Breast epithelium (tissue), 4 donors: ENCODE measurements at regions of chr6 and their contacts with region 1.

Region 1: GRCh38 chr6:9085054-9085708 is 649.8 kb upstream of the SLC35B3 start:
- DNase-seq: no peak
- H3K4me3 ChIP-seq: no peak overlapping the region
- H3K27ac ChIP-seq: no peak overlapping the region
- H3K4me1 ChIP-seq: no peaks in the 10 kb centered on the region
- H3K27me3 ChIP-seq: no peaks in the 10 kb centered on the region
- CTCF ChIP-seq: no peak
- POLR2A ChIP-seq: no peak

Region 2: DNA sequence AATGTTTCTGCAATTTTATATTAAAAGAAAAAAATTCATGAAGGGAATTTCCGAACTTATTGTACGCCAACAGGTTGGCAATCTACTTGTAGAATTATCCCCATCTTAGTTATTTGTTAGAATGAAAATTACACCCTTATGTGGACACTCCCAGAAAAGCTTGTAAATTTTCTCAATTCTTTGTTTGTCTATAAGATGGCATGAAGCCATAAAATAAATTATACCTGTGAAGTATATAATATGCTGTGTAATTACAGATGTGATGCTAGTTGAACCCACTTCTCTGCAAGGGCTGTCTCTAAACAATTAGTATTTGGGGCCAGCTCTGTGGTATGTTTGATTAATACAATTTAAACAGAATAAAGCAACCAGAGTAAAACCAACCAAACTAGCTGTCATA is 1595.8 kb before region 1 on chr6:
- intact Hi-C with region 1: no loop called
- DNase-seq: no peak
- H3K4me3 ChIP-seq: no peak overlapping the region
- H3K27ac ChIP-seq: no peak overlapping the region
- H3K4me1 ChIP-seq: no peaks in the 10 kb centered on the region
- H3K27me3 ChIP-seq: no peaks in the 10 kb centered on the region
- CTCF ChIP-seq: no peak
- POLR2A ChIP-seq: no peak

Region 3: DNA sequence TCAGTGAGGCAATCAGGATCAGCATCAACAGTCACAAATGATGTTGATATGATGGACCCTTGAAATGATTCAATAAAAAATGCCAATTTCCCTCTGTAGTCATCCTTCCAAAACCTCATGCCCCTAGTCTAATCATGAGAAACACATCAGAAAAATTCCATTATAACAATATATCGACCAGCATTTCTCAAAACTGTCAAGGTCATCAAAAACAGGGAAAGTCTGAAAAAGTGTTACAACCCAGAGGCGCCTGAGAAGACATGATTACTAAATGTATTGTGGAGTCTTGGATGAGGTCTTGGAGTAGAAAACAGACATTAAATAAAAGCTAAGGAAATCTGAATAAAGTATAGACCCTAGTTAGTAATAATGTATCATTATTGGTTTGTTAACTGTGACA is 783.7 kb before region 1 on chr6:
- intact Hi-C with region 1: loop called (anchors 5 kb)
- DNase-seq: no peak
- H3K4me3 ChIP-seq: no peak overlapping the region
- H3K27ac ChIP-seq: no peak overlapping the region
- H3K4me1 ChIP-seq: no peaks in the 10 kb centered on the region
- H3K27me3 ChIP-seq: no peaks in the 10 kb centered on the region
- CTCF ChIP-seq: no peak
- POLR2A ChIP-seq: no peak

Region 4: GRCh38 chr6:9095729-9096128 is 10.5 kb after region 1 on chr6:
- intact Hi-C with region 1: no loop called
- DNase-seq: no peak
- H3K4me3 ChIP-seq: no peak overlapping the region
- H3K27ac ChIP-seq: no peak overlapping the region
- H3K4me1 ChIP-seq: no peaks in the 10 kb centered on the region
- H3K27me3 ChIP-seq: no peaks in the 10 kb centered on the region
- CTCF ChIP-seq: no peak
- POLR2A ChIP-seq: no peak